HEK293 (cell line): ENCODE measurements at regions of chr9 and their contacts with region 1.

Region 1: GRCh38 chr9:137055385-137056364 is 1.8 kb upstream of the ENTPD2 start:
- H3K4me3 ChIP-seq: no peak overlapping the region
- H3K27ac ChIP-seq: no peak overlapping the region
- H3K4me1 ChIP-seq: no peaks in the 10 kb centered on the region
- CTCF ChIP-seq: no peak

Region 2: GRCh38 chr9:137070201-137070905 is 14.7 kb after region 1 on chr9 and contains the start of gene SAPCD2:
- CTCF ChIA-PET with region 1: interaction called, 237 read pairs
- POLR2A ChIA-PET with region 1: interaction called, 8 read pairs
- H3K4me3 ChIP-seq: peak within 1 kb of the TSS; percentile 38
- H3K27ac ChIP-seq: peak within 1 kb of the TSS; percentile 71
- H3K4me1 ChIP-seq: peaks cover 10% of the 10 kb centered on the region; the same call in 1 of the 2 replicates
- CTCF ChIP-seq: no peak

Region 3: DNA sequence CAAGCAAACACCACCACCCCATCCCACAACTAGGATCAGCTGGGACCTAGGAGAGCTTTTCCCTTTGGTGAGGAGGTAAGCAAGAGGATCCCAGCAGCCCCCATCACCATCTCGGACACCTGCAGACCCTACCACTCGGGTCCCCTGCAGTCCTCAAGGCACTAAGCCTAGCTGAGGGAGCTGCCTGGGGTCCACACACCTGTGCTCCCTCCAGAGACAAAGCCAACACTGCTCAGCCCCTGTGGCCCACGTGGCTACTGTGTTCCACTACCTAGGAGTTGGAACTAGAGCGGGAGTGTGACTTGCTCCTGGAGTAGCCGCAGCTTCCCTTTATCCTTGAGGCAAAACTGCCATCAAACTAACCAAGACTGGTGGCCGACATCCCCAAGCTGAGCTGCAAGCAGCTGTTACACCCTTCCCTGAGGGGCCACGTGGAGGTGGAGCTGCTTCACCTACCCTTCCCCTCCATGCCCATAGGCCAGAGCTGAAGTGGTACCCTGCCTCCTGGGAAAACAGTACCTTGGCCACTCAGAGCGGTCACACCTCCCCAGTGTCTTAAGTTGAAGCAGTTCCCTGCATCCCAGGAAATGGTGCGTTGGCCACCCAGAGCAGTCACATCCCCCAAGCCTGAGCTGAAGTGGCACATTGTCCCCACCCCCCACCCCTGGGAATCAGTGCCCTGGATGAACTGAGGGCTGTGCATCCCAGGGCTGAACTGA is 1027.4 kb after region 1 on chr9:
- CTCF ChIA-PET with region 1: no interaction called
- POLR2A ChIA-PET with region 1: no interaction called
- H3K4me3 ChIP-seq: no peak overlapping the region
- H3K27ac ChIP-seq: no peak overlapping the region
- H3K4me1 ChIP-seq: no peaks in the 10 kb centered on the region
- CTCF ChIP-seq: no peak